Activated T-helper 2 cell treated with anti-CD3 and anti-CD28 coated beads, Interferon-gamma antibody, Interleukin-2, Interleukin-4, amounts not matched to agents 10 μg/mL and 5 μg/mL and 100 μg/mL, durations not matched to agents 14 hours and 24 hours and 36 hours (primary cell): ENCODE measurements at regions of chr9 and their contacts with region 1.

Region 1: GRCh38 chr9:112379177-112380101 is 469 bp upstream of the HSDL2 start:
- DNase-seq: peak; percentile 97
- H3K4me3 Mint-ChIP-seq: peak overlapping the region; percentile 99
- H3K27ac Mint-ChIP-seq: peak overlapping the region; percentile 100
- H3K4me1 Mint-ChIP-seq: peaks cover 50% of the 10 kb centered on the region
- H3K27me3 Mint-ChIP-seq: no peaks in the 10 kb centered on the region

Region 2: DNA sequence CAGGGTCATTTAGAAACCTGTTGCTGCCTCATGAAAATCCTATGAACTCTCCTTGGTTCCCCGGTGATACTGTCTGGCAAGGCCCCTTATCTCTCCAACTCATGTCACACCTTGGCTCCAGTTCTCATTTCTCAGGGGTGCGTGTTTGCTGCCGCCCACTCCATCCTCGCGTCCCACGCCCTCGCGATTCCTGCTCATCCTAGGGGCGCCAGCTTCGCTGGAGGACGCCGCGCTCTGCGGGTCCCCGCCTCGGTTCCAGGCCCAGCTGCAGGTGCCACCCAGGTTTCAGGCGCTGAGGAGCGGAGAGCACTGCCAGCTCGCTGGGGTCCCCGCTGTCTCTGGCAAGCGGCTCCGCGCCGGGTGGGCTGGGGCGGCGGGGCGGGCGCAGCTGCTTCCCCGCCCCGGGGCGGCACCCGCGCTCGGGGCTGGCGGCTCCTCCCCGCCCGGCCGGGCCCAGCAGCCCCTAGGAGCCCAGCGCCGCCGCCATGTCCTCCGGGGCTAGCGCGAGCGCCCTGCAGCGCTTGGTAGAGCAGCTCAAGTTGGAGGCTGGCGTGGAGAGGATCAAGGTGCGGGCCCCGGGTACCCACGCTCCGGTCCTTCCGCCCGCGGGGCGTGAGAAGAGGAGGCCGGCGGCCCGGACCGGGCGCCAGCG is 718.2 kb before region 1 on chr9 and contains the start of gene GNG10:
- intact Hi-C with region 1: loop called (anchors 10 kb)
- DNase-seq: peak; percentile 62
- H3K4me3 Mint-ChIP-seq: peak within 1 kb of the TSS; percentile 87
- H3K27ac Mint-ChIP-seq: peak within 1 kb of the TSS; percentile 83
- H3K4me1 Mint-ChIP-seq: peaks cover 19% of the 10 kb centered on the region
- H3K27me3 Mint-ChIP-seq: no peaks in the 10 kb centered on the region
- total RNA-seq, gene GNG10: 30.7 and 30.9 TPM in 2 replicates

Region 3: DNA sequence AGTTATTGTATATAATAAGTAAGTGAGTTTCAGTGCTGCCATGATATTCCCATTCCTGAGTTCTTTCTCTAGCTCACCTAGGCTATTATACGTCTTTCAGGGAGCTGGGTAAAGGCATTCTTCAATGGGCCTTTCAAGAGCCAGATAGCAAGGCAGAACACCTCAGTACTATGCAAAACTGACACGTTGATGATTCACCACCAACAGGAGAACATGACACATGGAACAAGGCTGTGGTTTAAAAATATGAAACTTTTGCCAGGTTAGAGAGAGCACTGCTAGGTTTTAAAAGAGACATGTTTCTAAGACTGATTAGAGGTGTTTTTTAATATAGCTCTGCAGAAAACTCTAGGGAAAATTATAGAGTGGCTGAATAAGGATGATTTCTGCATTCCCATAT is 386.9 kb before region 1 on chr9:
- intact Hi-C with region 1: loop called (anchors 2 kb)
- DNase-seq: no peak
- H3K4me3 Mint-ChIP-seq: no peak overlapping the region
- H3K27ac Mint-ChIP-seq: no peak overlapping the region
- H3K4me1 Mint-ChIP-seq: peaks cover 18% of the 10 kb centered on the region
- H3K27me3 Mint-ChIP-seq: peaks cover 9% of the 10 kb centered on the region

Region 4: DNA sequence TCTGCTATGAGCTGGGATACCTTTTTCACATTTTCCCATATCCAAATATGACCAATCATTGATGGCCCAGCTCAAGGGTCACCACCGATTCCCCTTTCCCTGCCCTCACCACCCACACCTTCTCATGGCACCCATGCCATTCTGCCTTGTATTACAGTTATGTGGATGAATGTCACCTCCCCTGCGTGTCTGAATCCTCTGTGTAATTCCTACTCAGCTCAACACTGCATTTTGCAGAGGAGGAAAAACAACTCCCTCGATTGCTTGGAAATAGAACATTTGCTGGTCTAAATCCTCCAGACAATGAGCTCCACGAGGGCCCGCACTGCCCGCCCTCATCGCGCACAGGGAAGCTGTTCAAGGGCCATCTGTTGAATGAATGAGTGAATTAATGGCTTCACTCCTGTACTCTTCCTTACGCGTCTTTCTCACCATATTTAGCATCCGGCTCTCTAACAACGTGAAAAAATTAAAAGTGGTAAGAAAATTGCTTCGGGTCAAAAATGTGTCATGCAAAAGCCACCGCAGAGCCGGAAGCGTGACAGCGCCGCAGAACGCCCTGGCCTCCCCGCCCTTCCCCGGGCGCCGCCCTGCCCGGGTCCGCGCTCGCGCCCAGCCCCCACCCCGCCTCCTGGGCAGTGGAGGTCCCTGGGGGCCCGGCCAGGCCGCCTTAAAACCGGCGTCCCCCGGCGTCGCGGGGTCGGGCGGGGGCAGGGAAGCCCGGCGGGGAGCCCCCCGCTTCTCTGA is 205.0 kb before region 1 on chr9:
- intact Hi-C with region 1: loop called (anchors 5 kb)
- DNase-seq: peak; percentile 80
- H3K4me3 Mint-ChIP-seq: peak overlapping the region; percentile 85
- H3K27ac Mint-ChIP-seq: peak overlapping the region; percentile 94
- H3K4me1 Mint-ChIP-seq: peaks cover 54% of the 10 kb centered on the region
- H3K27me3 Mint-ChIP-seq: no peaks in the 10 kb centered on the region

Region 5: DNA sequence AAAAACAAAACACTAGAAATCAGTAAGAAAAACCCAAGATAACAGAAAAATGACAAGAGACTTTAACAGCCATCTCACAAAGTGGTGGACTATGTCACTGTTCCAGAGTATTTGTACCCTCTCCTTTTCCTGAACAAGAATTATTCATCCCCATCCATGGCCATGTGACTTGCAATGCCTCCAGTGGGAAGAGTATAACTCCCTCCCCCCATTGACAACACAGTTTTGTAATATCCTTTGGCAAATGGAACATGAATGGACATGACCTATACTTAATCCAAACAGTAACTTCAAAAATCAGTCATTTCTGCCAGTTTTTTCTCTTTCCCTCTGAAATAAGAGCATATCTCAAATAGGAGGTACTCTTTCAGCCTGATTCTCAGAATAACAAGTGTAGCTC is 79.9 kb before region 1 on chr9:
- intact Hi-C with region 1: no loop called
- DNase-seq: no peak
- H3K4me3 Mint-ChIP-seq: no peak overlapping the region
- H3K27ac Mint-ChIP-seq: no peak overlapping the region
- H3K4me1 Mint-ChIP-seq: peaks cover 24% of the 10 kb centered on the region
- H3K27me3 Mint-ChIP-seq: no peaks in the 10 kb centered on the region

Region 6: GRCh38 chr9:112333639-112334431 is 45.6 kb before region 1 on chr9:
- intact Hi-C with region 1: loop called (anchors 1 kb)
- DNase-seq: peak; percentile 87
- H3K4me3 Mint-ChIP-seq: peak overlapping the region; percentile 84
- H3K27ac Mint-ChIP-seq: peak overlapping the region; percentile 94
- H3K4me1 Mint-ChIP-seq: peaks cover 33% of the 10 kb centered on the region
- H3K27me3 Mint-ChIP-seq: no peaks in the 10 kb centered on the region

Region 7: GRCh38 chr9:112396416-112396815 is 17.0 kb after region 1 on chr9:
- intact Hi-C with region 1: no loop called
- DNase-seq: no peak
- H3K4me3 Mint-ChIP-seq: no peak overlapping the region
- H3K27ac Mint-ChIP-seq: no peak overlapping the region
- H3K4me1 Mint-ChIP-seq: peaks cover 4% of the 10 kb centered on the region
- H3K27me3 Mint-ChIP-seq: no peaks in the 10 kb centered on the region

Region 8: GRCh38 chr9:112486221-112487007 is 107.0 kb after region 1 on chr9 and contains the start of gene KIAA1958:
- intact Hi-C with region 1: loop called (anchors 2 kb)
- DNase-seq: peak; percentile 86
- H3K4me3 Mint-ChIP-seq: peak within 1 kb of the TSS; percentile 98
- H3K27ac Mint-ChIP-seq: peak within 1 kb of the TSS; percentile 97
- H3K4me1 Mint-ChIP-seq: peaks cover 33% of the 10 kb centered on the region
- H3K27me3 Mint-ChIP-seq: no peaks in the 10 kb centered on the region
- total RNA-seq, gene KIAA1958: 10.7 and 11.4 TPM in 2 replicates

Region 9: GRCh38 chr9:112750111-112750767 is 370.8 kb after region 1 on chr9 and contains the start of gene SNX30:
- intact Hi-C with region 1: loop called (anchors 2 kb)
- DNase-seq: peak; percentile 79
- H3K4me3 Mint-ChIP-seq: peak within 1 kb of the TSS; percentile 84
- H3K27ac Mint-ChIP-seq: peak within 1 kb of the TSS; percentile 86
- H3K4me1 Mint-ChIP-seq: peaks cover 52% of the 10 kb centered on the region
- H3K27me3 Mint-ChIP-seq: peaks cover 3% of the 10 kb centered on the region
- total RNA-seq, gene SNX30: 2.4 and 2.8 TPM in 2 replicates